CD8-positive, alpha-beta memory T cell (primary cell): ENCODE measurements at regions of chr3 and their contacts with region 1.

Region 1: DNA sequence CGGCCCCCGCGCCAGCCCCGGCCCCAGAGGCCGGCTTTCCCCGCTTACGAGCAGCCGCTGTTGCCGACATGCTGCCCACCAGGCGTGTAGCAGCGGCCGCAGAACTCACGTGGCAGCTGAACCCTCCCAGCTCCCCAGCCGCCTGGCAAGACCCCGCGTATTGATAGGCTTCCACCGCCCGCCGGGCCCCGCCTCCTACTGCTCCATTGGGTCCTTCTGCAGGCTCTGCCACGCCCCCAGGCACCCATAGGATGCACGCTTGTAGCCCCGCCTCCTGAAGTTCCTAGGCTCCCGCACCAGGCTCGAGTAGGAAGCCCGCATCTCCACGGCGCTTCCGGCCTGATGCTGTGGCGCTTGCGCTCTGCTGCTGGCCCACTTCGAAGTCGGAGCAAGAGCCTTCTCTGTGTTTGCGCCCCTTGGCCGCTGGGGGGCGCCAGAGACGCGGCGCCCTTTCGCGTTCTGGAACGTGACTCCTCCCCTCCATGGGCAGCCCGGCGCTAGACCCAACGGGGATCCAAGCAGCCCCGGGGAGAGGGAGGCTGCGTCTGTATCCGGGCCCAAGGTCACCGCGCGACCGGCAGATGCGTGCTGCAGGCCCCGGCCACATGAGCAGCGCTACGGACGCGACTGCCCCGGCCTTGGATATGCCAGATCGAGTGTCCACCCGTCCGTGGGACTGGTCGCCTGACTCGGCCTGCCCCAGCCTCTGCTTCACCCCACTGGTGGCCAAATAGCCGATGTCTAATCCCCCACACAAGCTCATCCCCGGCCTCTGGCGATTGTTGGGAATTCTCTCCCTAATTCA is at the starts of genes PARP3 and RRP9:
- DNase-seq: peak; percentile 99 to 100 (median 99)
- H3K4me3 ChIP-seq: peak within 1 kb of the TSS; percentile 96
- H3K4me3 Mint-ChIP-seq: peak within 1 kb of the TSS; percentile 86 to 95 (median 92)
- H3K27ac ChIP-seq: peak within 1 kb of the TSS; percentile 79
- H3K27ac Mint-ChIP-seq: peak within 1 kb of the TSS; percentile 74 to 97 (median 91)
- H3K4me1 ChIP-seq: peaks cover 30% of the 10 kb centered on the region
- H3K4me1 Mint-ChIP-seq: peaks cover 23 to 50% (median 34%) of the 10 kb centered on the region in 3 donors
- H3K27me3 ChIP-seq: no peaks in the 10 kb centered on the region
- H3K27me3 Mint-ChIP-seq: no peaks in the 10 kb centered on the region
- total RNA-seq, gene PARP3: 9.5 to 11.5 TPM
- total RNA-seq, gene RRP9: 82.7 to 87.0 TPM

Region 2: DNA sequence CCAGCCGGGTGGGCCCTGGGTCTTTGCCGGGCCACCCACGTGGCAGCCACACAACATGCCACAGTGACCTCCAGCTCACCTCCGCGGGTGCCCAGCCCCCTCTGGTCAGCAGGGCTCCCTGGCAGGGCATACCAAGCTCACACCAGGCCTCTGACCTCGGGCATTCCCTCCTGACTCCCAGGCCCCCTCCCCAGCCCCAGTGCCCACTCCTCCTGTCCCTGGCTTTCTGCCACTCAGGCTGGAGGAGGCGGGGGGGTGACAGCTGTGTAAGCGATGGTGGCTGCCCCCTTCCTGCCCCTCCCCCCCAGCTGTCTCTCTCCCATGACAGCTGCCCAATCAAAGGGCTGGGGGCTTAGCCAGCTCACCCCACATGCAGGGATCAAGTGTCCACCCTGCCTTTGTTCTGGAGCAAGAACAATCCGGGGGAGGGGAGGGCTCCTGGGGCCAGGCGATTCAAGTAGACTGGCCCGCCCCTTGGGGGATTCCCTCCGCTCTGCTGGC is 22.0 kb after region 1 on chr3:
- CTCF ChIA-PET with region 1: interaction called, 12 read pairs
- POLR2A ChIA-PET with region 1: interaction called, 3 read pairs
- DNase-seq: no peak
- H3K4me3 ChIP-seq: no peak overlapping the region
- H3K4me3 Mint-ChIP-seq: no peak overlapping the region
- H3K27ac ChIP-seq: no peak overlapping the region
- H3K27ac Mint-ChIP-seq: no peak overlapping the region
- H3K4me1 ChIP-seq: peaks cover 16% of the 10 kb centered on the region
- H3K4me1 Mint-ChIP-seq: peaks cover 13 to 30% (median 16%) of the 10 kb centered on the region in 3 donors
- H3K27me3 ChIP-seq: no peaks in the 10 kb centered on the region
- H3K27me3 Mint-ChIP-seq: peaks cover 0 to 8% of the 10 kb centered on the region in 2 donors

Region 3: GRCh38 chr3:51974963-51975851 is 33.2 kb after region 1 on chr3 and contains the start of gene ABHD14A:
- CTCF ChIA-PET with region 1: interaction called, 65 read pairs
- POLR2A ChIA-PET with region 1: interaction called, 7 read pairs
- DNase-seq: peak; percentile 67 to 84 (median 78)
- H3K4me3 ChIP-seq: peak within 1 kb of the TSS; percentile 97
- H3K4me3 Mint-ChIP-seq: peak within 1 kb of the TSS; percentile 89 to 99 (median 95)
- H3K27ac ChIP-seq: peak within 1 kb of the TSS; percentile 83
- H3K27ac Mint-ChIP-seq: peak within 1 kb of the TSS; percentile 87 to 98 (median 94)
- H3K4me1 ChIP-seq: peaks cover 32% of the 10 kb centered on the region
- H3K4me1 Mint-ChIP-seq: peaks cover 25 to 50% (median 46%) of the 10 kb centered on the region in 3 donors
- H3K27me3 ChIP-seq: no peaks in the 10 kb centered on the region
- H3K27me3 Mint-ChIP-seq: no peaks in the 10 kb centered on the region
- total RNA-seq, gene ABHD14A: 14.4 to 16.0 TPM

Region 4: DNA sequence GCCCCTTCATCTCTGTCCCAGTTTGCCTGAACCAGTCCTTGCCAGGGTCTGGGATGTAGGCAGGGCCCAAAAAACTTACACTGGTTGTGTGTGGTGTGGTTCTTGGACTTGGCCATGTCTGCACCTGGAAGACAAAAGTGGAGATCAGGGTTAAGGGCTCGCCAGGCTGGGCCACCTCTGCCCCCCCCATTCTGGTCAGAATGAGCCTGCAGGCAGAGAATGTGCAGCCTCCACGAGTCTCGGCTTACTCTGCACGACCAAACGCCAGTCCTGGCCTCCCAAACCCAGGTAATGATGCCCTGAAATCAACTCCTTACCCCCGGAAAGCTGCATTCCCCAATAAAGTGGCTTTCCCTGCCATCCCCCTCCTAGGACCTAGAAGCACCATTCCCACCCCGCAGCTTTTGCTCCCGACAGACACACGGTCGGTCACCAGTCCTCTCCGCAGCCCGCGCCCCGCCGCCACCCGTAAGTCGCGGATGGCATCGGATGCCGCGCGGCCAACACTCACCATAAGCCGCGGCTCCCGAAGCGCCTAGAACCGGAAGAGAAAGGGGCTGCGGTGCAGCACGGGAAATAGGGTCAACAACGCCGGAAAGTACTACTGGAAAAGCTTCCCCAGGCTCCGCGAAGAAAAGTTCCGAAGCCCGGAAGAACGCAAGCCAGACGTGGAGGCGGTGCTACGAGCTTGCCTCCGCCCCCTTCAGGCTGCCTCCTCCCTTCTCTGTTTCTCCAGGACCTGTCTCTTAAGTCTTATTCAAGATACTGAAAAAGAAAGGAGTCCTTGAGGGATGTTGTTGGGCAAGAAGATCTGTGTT is 53.6 kb after region 1 on chr3 and contains the start of gene RPL29:
- CTCF ChIA-PET with region 1: interaction called, 20 read pairs
- POLR2A ChIA-PET with region 1: interaction called, 7 read pairs
- DNase-seq: peak; percentile 84 to 91 (median 90)
- H3K4me3 ChIP-seq: peak within 1 kb of the TSS; percentile 97
- H3K4me3 Mint-ChIP-seq: peak within 1 kb of the TSS; percentile 94 to 100 (median 100)
- H3K27ac ChIP-seq: peak within 1 kb of the TSS; percentile 91
- H3K27ac Mint-ChIP-seq: peak within 1 kb of the TSS; percentile 91 to 100 (median 100)
- H3K4me1 ChIP-seq: peaks cover 17% of the 10 kb centered on the region
- H3K4me1 Mint-ChIP-seq: peaks cover 30 to 49% (median 46%) of the 10 kb centered on the region in 3 donors
- H3K27me3 ChIP-seq: no peaks in the 10 kb centered on the region
- H3K27me3 Mint-ChIP-seq: peaks cover 0 to 1% of the 10 kb centered on the region in 2 donors
- total RNA-seq, gene RPL29: 1,367 to 1,382 TPM

Region 5: DNA sequence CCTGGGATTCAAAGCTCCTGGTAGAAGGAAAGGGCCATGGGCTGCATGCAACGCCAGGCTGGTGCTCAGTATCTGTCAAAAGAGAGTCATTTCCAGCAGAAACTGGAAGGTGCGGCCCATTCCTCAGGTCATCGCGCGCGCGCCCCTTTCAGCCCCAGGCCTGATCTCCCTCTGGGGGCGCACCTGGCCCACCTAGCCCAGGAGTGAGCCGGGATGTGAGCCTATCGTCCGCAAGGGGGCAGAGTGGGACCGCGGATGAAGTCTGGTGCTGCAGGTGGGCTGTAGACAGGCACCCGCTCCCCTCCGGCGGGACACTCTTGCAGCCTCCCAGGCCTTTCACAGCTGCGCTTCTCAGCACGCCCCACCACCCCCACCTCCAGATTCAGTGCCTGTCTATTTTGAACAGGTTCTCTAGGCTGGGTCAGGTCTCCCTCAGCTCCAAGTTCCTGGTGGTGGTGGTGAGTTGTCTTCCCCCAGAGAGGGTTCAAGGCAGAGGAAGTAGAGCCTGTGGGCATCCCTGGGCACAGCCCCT is 59.5 kb after region 1 on chr3:
- CTCF ChIA-PET with region 1: interaction called, 20 read pairs
- POLR2A ChIA-PET with region 1: no interaction called
- DNase-seq: peak; percentile 80 to 92 (median 87)
- H3K4me3 ChIP-seq: no peak overlapping the region
- H3K4me3 Mint-ChIP-seq: peak overlapping the region in 2 of 7 donors; percentile 2 to 7
- H3K27ac ChIP-seq: no peak overlapping the region
- H3K27ac Mint-ChIP-seq: peak overlapping the region in 2 of 8 donors; percentile 11 to 28
- H3K4me1 ChIP-seq: peaks cover 19% of the 10 kb centered on the region
- H3K4me1 Mint-ChIP-seq: peaks cover 7 to 15% (median 10%) of the 10 kb centered on the region in 3 donors
- H3K27me3 ChIP-seq: no peaks in the 10 kb centered on the region
- H3K27me3 Mint-ChIP-seq: peaks cover 0 to 1% of the 10 kb centered on the region in 2 donors

Region 6: DNA sequence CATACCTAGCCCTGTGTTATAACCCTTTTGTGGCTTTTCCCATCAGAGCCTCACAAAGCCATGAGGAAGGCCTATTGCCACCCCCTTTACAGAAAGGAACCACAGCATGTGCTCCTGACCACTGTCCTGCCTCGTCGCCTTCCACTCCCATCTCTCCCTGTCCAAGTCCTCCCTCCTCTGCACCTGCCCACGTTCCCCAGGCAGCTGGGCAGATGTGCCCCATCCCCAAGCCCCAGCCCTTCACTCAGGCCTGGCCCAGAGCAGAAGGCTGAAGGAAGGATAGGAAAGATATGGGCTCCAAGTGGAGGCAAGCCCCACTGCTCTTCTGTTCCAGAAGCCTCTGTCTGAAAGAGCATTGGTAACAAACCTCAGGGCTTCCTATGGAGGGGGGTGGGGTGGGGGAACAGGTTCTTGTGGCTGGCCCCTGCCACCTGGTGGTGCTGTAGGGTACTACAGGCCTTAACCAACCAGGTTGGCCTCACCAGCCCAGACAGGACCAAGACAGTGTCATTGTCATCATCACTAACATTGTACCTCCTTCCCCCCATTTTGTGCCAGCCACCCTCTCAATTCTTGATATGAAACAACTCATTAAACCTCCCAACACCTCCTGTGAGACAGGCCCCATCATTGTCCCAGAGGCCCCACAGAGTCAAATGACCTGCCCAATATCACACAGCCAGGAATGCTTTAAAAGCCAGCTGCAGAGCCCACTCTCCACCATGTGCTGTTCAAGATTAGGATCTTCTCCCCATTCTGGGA is 202.2 kb after region 1 on chr3:
- CTCF ChIA-PET with region 1: interaction called, 14 read pairs
- POLR2A ChIA-PET with region 1: no interaction called
- DNase-seq: peak; percentile 75 to 91 (median 83)
- H3K4me3 ChIP-seq: no peak overlapping the region
- H3K4me3 Mint-ChIP-seq: no peak overlapping the region
- H3K27ac ChIP-seq: no peak overlapping the region
- H3K27ac Mint-ChIP-seq: peak overlapping the region in 6 of 8 donors; percentile 10 to 67 (median 34)
- H3K4me1 ChIP-seq: peaks cover 6% of the 10 kb centered on the region
- H3K4me1 Mint-ChIP-seq: peaks cover 6 to 8% (median 8%) of the 10 kb centered on the region in 3 donors
- H3K27me3 ChIP-seq: no peaks in the 10 kb centered on the region
- H3K27me3 Mint-ChIP-seq: no peaks in the 10 kb centered on the region